ENCODE measurements at regions of chr1 and their contacts with region 1.

Region 1: GRCh38 chr1:68232354-68233148 is at the start of gene WLS:
- DNase-seq: peak; percentile 79
- ATAC-seq: peak; percentile 76
- H3K4me3 Mint-ChIP-seq: peak within 1 kb of the TSS; percentile 82
- H3K27ac Mint-ChIP-seq: no peak within 1 kb of the TSS
- H3K4me1 Mint-ChIP-seq: peaks cover 29% of the 10 kb centered on the region
- H3K27me3 Mint-ChIP-seq: peaks cover 98% of the 10 kb centered on the region
- CTCF ChIP-seq: no peak
- total RNA-seq, gene WLS: 4.5 to 5.7 TPM (median 5.3 TPM) in 3 replicates

Region 2: DNA sequence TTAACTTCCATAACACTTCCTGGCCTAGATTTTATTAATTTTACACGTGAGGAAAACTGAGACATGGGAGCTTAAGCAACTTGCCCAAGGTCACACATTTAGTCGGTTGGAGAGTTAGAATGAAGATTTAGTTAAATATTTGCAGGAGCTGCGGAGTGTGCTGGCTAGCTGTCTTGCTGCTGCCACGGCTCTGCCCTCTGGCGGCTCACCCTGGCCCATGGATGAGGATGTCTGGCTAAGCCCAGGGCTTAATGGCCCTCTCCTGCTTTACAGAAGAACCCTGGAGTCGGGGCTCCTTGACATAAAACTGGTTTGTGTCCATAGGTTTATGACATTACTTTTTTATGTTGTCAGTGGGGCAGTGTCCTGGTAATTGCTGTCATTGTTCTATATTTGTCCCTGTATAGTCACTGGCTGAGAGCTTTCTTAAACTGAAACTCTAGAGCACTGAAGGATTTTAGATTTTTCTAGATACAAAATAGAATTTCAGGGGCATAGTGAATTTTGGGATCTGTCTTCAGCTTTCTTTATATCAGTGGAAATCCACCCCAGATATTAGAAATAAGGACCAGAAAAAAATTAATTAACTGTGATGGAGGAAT is 88.6 kb after region 1 on chr1:
- CTCF ChIA-PET with region 1: interaction called, 14 read pairs
- POLR2A ChIA-PET with region 1: no interaction called
- DNase-seq: peak; percentile 73
- ATAC-seq: peak; percentile 90
- H3K4me3 Mint-ChIP-seq: no peak overlapping the region
- H3K27ac Mint-ChIP-seq: no peak overlapping the region
- H3K4me1 Mint-ChIP-seq: peaks cover 13% of the 10 kb centered on the region
- H3K27me3 Mint-ChIP-seq: no peaks in the 10 kb centered on the region; the same call in 1 of the 2 replicates
- CTCF ChIP-seq: no peak

Region 3: GRCh38 chr1:68346188-68346808 is 113.7 kb after region 1 on chr1:
- CTCF ChIA-PET with region 1: interaction called, 10 read pairs
- POLR2A ChIA-PET with region 1: no interaction called
- DNase-seq: no peak
- ATAC-seq: no peak
- H3K4me3 Mint-ChIP-seq: no peak overlapping the region
- H3K27ac Mint-ChIP-seq: no peak overlapping the region
- H3K4me1 Mint-ChIP-seq: 0 out of 2 replicates have a peak, but pooled peaks cover 2% of the 10 kb centered on the region
- H3K27me3 Mint-ChIP-seq: no peaks in the 10 kb centered on the region
- CTCF ChIP-seq: peak; percentile 29; the same call in 1 of the 2 replicates